H1 (cell line): ENCODE measurements at regions of chr9 and their contacts with region 1.

Region 1: GRCh38 chr9:82606492-82607382 is 456.2 kb downstream of the RASEF start:
- DNase-seq: peak; percentile 46 to 58
- H3K4me3 ChIP-seq: no peak overlapping the region
- H3K27ac ChIP-seq: no peak overlapping the region
- H3K4me1 ChIP-seq: 0 out of 7 replicates have a peak, but pooled peaks cover 0 to 2% (median 0%) of the 10 kb centered on the region in 4 experiments
- H3K27me3 ChIP-seq: no peaks in the 10 kb centered on the region
- CTCF ChIP-seq: peak in 2 of 3 experiments; percentile 62 to 71; a peak in 3 of 4 replicates
- EP300 ChIP-seq: no peak
- POLR2A ChIP-seq: no peak
- RAD21 ChIP-seq: peak; percentile 92

Region 2: DNA sequence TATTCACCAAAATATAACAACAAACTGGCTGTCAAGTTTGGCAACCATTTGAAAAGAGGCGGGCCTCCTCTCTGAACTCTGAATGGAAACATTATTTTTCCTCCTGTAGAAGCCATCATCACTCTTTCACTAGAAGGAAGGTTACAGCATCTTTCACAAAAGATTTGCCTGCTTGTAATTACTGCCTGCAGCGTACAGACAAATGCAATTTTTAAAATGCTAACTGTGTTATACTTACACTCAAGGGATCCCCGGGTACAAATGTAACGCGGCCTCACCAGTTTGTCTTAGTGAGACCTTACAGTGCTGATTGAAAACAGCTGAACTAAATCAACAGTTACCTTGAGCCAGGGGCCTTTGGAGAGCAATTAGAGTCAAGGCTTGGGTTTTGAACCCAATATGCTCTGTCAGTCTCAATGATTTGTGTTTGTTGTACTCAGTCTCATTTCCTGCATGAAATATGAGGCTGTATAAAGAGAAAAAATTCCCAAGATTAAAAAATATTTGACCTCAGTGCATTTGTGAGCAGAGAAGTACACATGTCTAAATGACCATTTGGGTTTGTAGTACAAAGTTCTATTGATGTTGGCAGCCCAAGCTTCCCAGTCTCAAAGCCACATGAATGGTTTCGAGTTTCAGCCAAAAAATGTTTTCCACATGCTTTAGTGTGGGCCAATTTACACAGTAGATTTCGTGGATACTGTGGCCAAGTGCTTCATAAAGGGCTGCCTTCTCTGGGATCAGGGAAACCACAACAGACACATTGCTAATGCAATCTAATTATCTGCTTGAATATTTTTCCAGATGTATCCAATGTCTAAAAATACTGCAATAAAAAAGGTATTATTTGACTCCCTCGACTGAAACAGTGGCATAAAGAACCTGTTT is 118.2 kb before region 1 on chr9:
- CTCF ChIA-PET with region 1: no interaction called
- POLR2A ChIA-PET with region 1: no interaction called
- DNase-seq: no peak
- H3K4me3 ChIP-seq: no peak overlapping the region
- H3K27ac ChIP-seq: no peak overlapping the region
- H3K4me1 ChIP-seq: peaks cover 0 to 4% (median 0%) of the 10 kb centered on the region in 4 experiments; a peak in 1 of 7 replicates
- H3K27me3 ChIP-seq: no peaks in the 10 kb centered on the region
- CTCF ChIP-seq: no peak
- EP300 ChIP-seq: no peak
- POLR2A ChIP-seq: no peak
- RAD21 ChIP-seq: no peak

Region 3: DNA sequence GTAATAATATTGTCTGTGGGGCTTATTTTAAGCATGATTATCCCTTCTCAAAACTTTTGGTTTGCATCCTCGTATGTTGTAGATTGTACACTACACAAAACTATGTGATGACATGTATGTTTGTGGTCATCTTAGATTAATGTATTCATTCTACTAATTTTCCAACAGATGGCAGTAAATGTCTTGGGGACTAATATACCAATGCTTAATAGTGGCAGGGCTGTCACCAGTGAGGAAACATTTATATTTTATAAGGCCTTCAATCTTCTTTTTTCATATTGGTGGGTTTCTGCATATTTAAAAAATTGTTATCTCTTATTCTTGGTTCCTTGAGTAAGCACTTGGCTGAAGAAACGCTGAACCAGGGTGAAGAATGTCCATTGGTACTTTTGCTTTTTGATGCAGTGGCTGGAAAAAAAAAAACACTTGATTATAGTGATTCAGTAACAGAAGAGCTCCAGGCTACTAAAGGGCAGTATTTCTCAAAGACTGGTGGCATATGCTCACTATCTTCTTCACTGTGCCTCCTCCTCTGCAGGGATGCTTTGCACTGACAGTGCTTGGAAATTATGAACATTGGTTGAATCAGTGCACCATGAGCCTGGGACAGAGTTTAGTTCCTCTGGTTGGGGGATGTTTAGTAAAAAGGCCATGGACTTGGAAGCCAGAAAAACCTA is 74.1 kb before region 1 on chr9:
- CTCF ChIA-PET with region 1: interaction called, 18 read pairs
- POLR2A ChIA-PET with region 1: no interaction called
- DNase-seq: no peak
- H3K4me3 ChIP-seq: no peak overlapping the region
- H3K27ac ChIP-seq: no peak overlapping the region
- H3K4me1 ChIP-seq: no peaks in the 10 kb centered on the region
- H3K27me3 ChIP-seq: no peaks in the 10 kb centered on the region
- CTCF ChIP-seq: peak in 1 of 3 experiments; percentile 13; a peak in 1 of 4 replicates
- EP300 ChIP-seq: no peak
- POLR2A ChIP-seq: no peak
- RAD21 ChIP-seq: peak; percentile 47 to 53

Region 4: DNA sequence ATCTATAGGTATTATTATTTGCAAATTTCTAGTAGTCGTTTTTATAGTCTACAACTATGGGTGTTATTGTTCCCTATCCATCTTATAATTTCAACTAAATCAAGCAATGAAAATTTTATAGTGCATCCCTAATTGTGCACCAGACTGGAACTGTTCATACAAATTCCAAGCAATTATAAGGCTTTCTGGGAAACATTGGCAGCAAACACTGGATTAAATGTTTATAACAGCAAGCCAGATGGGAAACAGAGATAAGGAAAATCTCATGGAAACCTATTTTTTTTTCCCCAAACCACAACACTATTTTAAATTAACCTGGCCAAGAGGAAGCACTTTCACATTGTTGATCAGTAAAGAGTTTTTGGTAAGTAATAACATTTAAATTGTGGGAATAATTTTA is 68.1 kb before region 1 on chr9:
- CTCF ChIA-PET with region 1: interaction called, 18 read pairs
- POLR2A ChIA-PET with region 1: no interaction called
- DNase-seq: no peak
- H3K4me3 ChIP-seq: no peak overlapping the region
- H3K27ac ChIP-seq: no peak overlapping the region
- H3K4me1 ChIP-seq: no peaks in the 10 kb centered on the region
- H3K27me3 ChIP-seq: no peaks in the 10 kb centered on the region
- CTCF ChIP-seq: no peak
- EP300 ChIP-seq: no peak
- POLR2A ChIP-seq: no peak
- RAD21 ChIP-seq: no peak

Region 5: GRCh38 chr9:82553654-82554366 is 52.9 kb before region 1 on chr9:
- CTCF ChIA-PET with region 1: interaction called, 63 read pairs
- POLR2A ChIA-PET with region 1: no interaction called
- DNase-seq: no peak
- H3K4me3 ChIP-seq: no peak overlapping the region
- H3K27ac ChIP-seq: no peak overlapping the region
- H3K4me1 ChIP-seq: peaks cover 0 to 4% (median 1%) of the 10 kb centered on the region in 4 experiments; a peak in 3 of 7 replicates
- H3K27me3 ChIP-seq: peaks cover 0 to 2% (median 0%) of the 10 kb centered on the region in 4 experiments; a peak in 1 of 7 replicates
- CTCF ChIP-seq: no peak
- EP300 ChIP-seq: no peak
- POLR2A ChIP-seq: no peak
- RAD21 ChIP-seq: no peak

Region 6: DNA sequence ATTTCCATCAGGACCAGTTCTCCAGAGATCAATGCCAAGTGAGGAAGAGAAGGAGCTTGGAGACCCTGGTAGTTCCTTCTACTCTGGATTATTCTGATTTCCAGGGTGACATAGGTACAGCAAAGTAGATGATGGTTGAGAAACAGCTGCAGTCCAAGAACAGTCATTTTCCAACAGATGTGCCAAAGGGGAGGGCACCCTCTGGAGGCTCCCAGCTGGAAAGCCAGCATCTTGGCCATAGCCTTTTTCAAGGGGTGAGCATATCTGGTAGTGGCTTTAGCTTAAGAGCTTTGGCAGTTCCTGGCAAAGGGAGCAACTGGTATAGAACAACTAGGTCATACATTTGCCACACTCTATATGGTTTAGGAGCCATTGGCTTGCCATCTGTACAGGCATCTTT is 36.5 kb before region 1 on chr9:
- CTCF ChIA-PET with region 1: interaction called, 15 read pairs
- POLR2A ChIA-PET with region 1: no interaction called
- DNase-seq: no peak
- H3K4me3 ChIP-seq: no peak overlapping the region
- H3K27ac ChIP-seq: no peak overlapping the region
- H3K4me1 ChIP-seq: no peaks in the 10 kb centered on the region
- H3K27me3 ChIP-seq: no peaks in the 10 kb centered on the region
- CTCF ChIP-seq: no peak
- EP300 ChIP-seq: no peak
- POLR2A ChIP-seq: no peak
- RAD21 ChIP-seq: peak; percentile 7 to 25; a peak in 2 of 4 replicates

Region 7: GRCh38 chr9:82593501-82593900 is 13.2 kb before region 1 on chr9:
- CTCF ChIA-PET with region 1: interaction called, 13 read pairs
- POLR2A ChIA-PET with region 1: no interaction called
- DNase-seq: no peak
- H3K4me3 ChIP-seq: no peak overlapping the region
- H3K27ac ChIP-seq: no peak overlapping the region
- H3K4me1 ChIP-seq: no peaks in the 10 kb centered on the region
- H3K27me3 ChIP-seq: no peaks in the 10 kb centered on the region
- CTCF ChIP-seq: no peak
- EP300 ChIP-seq: no peak
- POLR2A ChIP-seq: no peak
- RAD21 ChIP-seq: no peak

Region 8: DNA sequence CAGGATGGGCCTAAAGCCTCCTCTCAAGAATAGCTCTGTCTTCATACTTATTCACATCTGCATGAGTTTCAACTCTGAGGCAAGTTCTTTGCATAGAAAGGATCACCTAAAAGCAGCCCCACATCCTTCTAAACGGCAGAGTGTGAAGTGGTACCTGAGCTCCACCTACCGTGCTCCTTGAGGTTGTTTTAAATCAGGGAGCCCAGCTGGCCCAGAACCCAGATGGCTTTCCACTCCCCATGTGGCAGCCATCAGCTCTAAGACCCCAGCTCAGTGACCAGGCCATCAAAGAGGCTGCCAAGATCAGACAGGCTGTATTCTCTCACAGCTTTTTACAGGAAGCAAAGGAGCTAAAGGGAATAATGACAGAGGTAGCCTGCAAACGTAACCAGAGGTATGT is 156.9 kb after region 1 on chr9:
- CTCF ChIA-PET with region 1: interaction called, 10 read pairs
- POLR2A ChIA-PET with region 1: no interaction called
- DNase-seq: no peak
- H3K4me3 ChIP-seq: no peak overlapping the region
- H3K27ac ChIP-seq: no peak overlapping the region
- H3K4me1 ChIP-seq: no peaks in the 10 kb centered on the region
- H3K27me3 ChIP-seq: no peaks in the 10 kb centered on the region
- CTCF ChIP-seq: peak; percentile 41 to 56 (median 45)
- EP300 ChIP-seq: no peak
- POLR2A ChIP-seq: no peak
- RAD21 ChIP-seq: peak; percentile 81 to 86